Activated CD4-positive, alpha-beta T cell treated with anti-CD3 and anti-CD28 coated beads, Interleukin-2, amount 10 ng/mL, durations not matched to agents 24 days and 14 days (primary cell): ENCODE measurements at regions of chrX and their contacts with region 1.

Region 1: DNA sequence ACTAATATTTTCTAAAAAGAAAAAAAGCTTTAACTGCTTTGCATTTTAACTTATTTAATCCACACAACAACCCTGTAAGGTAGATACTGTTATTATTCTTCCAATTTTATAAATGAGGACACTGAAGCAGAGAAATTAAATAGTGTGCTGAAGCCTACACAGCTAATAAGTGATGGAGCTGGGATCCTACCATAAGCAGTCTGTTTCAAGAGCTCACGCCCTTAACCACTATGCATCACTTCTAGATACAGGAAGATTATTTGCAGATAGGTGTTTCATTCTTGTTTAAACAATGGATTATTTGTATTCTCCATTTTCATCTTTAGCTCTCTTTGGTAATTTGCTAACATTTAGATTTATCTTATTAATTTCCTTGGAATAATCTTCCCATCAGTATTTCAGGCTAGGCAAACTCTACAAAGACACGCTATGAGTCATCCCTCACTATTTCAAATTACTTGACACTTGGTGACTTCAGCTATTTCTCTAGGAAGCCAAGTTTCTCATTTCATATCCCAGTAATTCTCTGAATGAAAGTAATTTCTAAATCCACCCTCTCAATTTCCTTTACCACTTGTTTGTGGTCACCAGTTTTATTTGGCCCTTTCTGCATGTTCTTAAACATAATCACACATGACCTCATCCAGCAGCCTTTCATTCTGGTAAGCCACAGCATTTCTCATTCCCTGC is 67.3 kb downstream of the ASB9 start:
- DNase-seq: peak; percentile 56
- H3K4me3 Mint-ChIP-seq: no peak overlapping the region
- H3K27ac Mint-ChIP-seq: no peak overlapping the region
- H3K4me1 Mint-ChIP-seq: peaks cover 32% of the 10 kb centered on the region
- H3K27me3 Mint-ChIP-seq: peaks cover 5% of the 10 kb centered on the region

Region 2: DNA sequence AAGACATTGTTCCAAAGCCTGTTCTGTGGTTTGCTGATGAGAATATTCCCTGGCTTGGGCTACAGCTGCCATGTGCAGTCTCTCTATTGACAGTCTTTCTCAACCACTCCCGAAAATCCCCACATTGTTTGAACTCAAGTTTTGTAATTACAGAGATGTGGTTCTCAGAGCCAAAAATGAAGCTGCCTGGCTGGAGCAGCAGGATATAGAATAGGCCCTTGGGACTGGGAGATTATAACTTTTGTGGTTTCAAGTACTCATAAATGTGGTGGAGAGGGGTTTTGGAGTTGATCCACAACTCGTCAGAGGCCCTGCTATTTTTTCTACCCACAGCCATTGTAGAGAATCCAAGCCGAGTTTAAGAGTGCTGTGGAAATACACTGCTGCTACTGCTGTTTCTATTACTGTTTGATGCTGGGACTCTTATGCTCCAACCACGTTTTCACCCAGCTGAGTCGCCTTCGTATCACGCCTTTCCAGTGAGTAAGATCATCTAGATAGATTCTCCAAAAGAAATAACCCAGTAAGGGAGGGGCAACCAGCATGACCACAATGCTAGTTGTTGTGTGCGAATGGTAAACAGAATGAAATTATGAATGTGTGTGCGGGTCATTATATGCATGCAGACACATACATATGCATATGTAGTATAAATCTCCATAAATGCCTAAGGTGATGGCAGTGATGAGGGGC is 1825.6 kb before region 1 on chrX:
- intact Hi-C with region 1: loop called (anchors 5 kb)
- DNase-seq: no peak
- H3K4me3 Mint-ChIP-seq: no peak overlapping the region
- H3K27ac Mint-ChIP-seq: no peak overlapping the region
- H3K4me1 Mint-ChIP-seq: peaks cover 26% of the 10 kb centered on the region
- H3K27me3 Mint-ChIP-seq: no peaks in the 10 kb centered on the region

Region 3: DNA sequence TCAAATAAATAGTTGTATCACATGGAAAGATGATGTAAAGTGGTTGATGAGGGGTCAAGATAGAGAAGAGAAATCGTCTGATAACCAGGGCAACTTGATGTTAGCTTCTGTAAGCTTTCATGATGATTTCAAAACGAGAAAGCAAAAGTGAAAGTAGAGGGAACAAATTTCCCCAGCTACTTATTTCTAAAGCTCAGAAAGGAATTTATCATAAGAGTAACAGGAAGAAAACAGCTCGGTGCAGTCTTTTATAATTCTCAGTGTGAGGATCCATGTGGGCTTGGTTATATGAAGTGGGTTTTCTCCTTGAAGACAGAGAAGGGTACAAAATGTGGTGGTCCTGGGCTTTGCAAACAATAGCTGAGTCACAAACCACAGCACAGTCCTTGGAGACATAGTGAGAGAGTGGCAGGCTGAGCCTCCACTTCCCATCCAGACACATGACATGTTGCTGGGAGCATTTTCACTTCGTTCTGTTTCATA is 705.4 kb before region 1 on chrX:
- intact Hi-C with region 1: loop called (anchors 2 kb)
- DNase-seq: peak; percentile 64
- H3K4me3 Mint-ChIP-seq: peak overlapping the region; percentile 66
- H3K27ac Mint-ChIP-seq: peak overlapping the region; percentile 87
- H3K4me1 Mint-ChIP-seq: peaks cover 3% of the 10 kb centered on the region
- H3K27me3 Mint-ChIP-seq: peaks cover 1% of the 10 kb centered on the region

Region 4: GRCh38 chrX:15033917-15034316 is 168.7 kb before region 1 on chrX:
- intact Hi-C with region 1: loop called (anchors 5 kb)
- DNase-seq: no peak
- H3K4me3 Mint-ChIP-seq: no peak overlapping the region
- H3K27ac Mint-ChIP-seq: no peak overlapping the region
- H3K4me1 Mint-ChIP-seq: peaks cover 6% of the 10 kb centered on the region
- H3K27me3 Mint-ChIP-seq: no peaks in the 10 kb centered on the region

Region 5: GRCh38 chrX:15151267-15152186 is 51.1 kb before region 1 on chrX:
- intact Hi-C with region 1: loop called (anchors 1 kb)
- DNase-seq: peak; percentile 67
- H3K4me3 Mint-ChIP-seq: peak overlapping the region; percentile 66
- H3K27ac Mint-ChIP-seq: peak overlapping the region; percentile 85
- H3K4me1 Mint-ChIP-seq: peaks cover 25% of the 10 kb centered on the region
- H3K27me3 Mint-ChIP-seq: no peaks in the 10 kb centered on the region

Region 6: DNA sequence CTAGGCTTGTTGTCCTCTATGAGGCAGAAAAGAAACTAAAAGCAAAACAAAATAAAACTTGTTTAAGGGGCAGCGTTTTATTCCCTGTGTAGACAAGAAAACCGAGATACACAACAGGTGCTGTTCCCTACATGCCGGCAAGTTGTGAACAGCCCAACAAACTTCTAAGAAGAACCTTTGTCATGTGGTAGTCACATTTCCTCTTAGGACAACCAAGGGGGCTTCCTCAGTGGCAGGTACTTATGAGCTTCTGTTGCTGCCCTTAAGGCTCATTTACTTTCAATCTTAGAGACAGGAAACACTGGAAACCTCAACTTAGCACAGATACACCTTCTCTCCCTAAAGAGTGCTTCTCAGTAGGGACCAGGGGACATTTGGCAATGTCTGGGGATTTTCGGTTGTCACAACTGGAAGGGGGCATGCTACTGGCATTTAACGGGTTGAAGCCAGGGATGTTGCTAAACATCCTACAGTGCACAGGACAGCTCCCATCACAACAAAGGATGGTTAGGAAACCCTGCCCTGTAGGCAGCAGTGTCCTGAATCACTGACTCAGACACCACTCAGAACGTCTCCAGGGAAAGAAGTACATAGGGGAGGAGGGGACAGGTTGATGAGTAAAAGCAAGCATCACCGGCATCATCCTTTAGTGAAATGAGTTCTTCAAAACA is 43.7 kb before region 1 on chrX:
- intact Hi-C with region 1: loop called (anchors 1 kb)
- DNase-seq: peak; percentile 80
- H3K4me3 Mint-ChIP-seq: peak overlapping the region; percentile 85
- H3K27ac Mint-ChIP-seq: peak overlapping the region; percentile 91
- H3K4me1 Mint-ChIP-seq: peaks cover 25% of the 10 kb centered on the region
- H3K27me3 Mint-ChIP-seq: no peaks in the 10 kb centered on the region

Region 7: DNA sequence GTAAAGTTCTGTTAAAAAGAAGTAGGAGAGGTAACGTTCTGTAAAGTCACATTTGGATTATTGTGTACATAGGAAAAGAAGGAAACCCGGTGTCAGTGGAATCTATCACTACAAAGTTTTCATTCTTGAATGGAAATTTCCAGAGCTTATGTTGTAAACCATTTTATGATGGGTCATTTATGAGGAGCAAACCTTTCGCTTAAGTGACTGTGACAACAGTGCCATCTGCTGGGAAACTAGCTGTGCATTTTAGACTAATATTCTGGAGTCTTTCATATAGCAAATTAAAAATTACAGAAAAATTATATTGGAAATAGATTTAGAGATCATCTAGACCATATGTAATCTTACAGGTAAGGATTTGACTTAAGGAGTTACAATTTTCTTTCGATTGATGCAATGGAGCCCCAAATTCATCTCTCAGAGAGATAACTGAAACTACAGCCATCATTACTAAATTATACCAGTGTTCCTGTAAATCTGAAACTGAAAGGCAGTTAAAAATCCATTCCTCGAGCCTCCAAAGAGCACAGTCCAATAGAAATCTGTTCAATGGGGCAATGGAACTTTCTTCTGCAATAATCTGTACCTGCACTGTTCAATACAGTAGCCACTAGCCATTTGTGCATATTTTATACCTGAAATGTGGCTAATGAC is 40.4 kb after region 1 on chrX:
- intact Hi-C with region 1: loop called (anchors 2 kb)
- DNase-seq: peak; percentile 80
- H3K4me3 Mint-ChIP-seq: no peak overlapping the region
- H3K27ac Mint-ChIP-seq: no peak overlapping the region
- H3K4me1 Mint-ChIP-seq: no peaks in the 10 kb centered on the region
- H3K27me3 Mint-ChIP-seq: no peaks in the 10 kb centered on the region